Colonic mucosa (tissue), 4 donors: ENCODE measurements at regions of chr2 and their contacts with region 1.

Region 1: GRCh38 chr2:203650860-203651613 is 55.4 kb upstream of the CD28 start:
- DNase-seq: peak; percentile 85
- H3K4me3 ChIP-seq: no peak overlapping the region
- H3K27ac ChIP-seq: peak overlapping the region; percentile 87
- H3K4me1 ChIP-seq: peaks cover 20% of the 10 kb centered on the region
- H3K27me3 ChIP-seq: no peaks in the 10 kb centered on the region
- CTCF ChIP-seq: peak; percentile 17

Region 2: DNA sequence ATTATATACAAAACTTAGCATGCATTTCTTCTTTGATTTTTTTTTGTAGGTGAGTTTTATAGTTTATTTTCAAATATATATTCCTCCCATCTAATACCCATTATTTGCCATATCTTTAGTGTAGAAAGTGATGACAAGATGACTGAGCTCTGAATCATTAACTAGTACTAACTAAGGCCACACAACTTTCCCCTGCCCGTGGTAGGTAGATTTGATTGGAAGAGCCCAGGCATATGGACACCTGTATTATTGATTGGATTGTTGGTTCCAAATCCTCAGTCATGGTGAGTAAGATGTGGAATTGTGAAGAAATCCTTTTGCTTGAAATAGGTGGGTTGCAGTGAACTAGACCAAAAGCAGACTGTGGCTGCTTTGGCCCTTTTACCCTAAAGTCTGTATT is 268.0 kb before region 1 on chr2:
- intact Hi-C with region 1: no loop called
- DNase-seq: no peak
- H3K4me3 ChIP-seq: no peak overlapping the region
- H3K27ac ChIP-seq: no peak overlapping the region
- H3K4me1 ChIP-seq: no peaks in the 10 kb centered on the region
- H3K27me3 ChIP-seq: no peaks in the 10 kb centered on the region
- CTCF ChIP-seq: no peak

Region 3: GRCh38 chr2:203814661-203815540 is 163.9 kb after region 1 on chr2:
- intact Hi-C with region 1: loop called (anchors 10 kb)
- DNase-seq: peak; percentile 71
- H3K4me3 ChIP-seq: no peak overlapping the region
- H3K27ac ChIP-seq: peak overlapping the region; percentile 62
- H3K4me1 ChIP-seq: peaks cover 4% of the 10 kb centered on the region
- H3K27me3 ChIP-seq: no peaks in the 10 kb centered on the region
- CTCF ChIP-seq: peak; percentile 81